A673 (cell line): ENCODE measurements at regions of chr6 and their contacts with region 1.

Region 1: GRCh38 chr6:32971581-32972352 is 3.4 kb downstream of the BRD2 start:
- DNase-seq: peak; percentile 100
- H3K4me3 ChIP-seq: peak overlapping the region; percentile 94
- H3K27ac ChIP-seq: peak overlapping the region; percentile 100
- H3K4me1 ChIP-seq: peaks cover 32% of the 10 kb centered on the region
- H3K27me3 ChIP-seq: no peaks in the 10 kb centered on the region
- CTCF ChIP-seq: no peak

Region 2: GRCh38 chr6:32838114-32838958 is 133.4 kb before region 1 on chr6 and contains the start of gene TAP2:
- CTCF ChIA-PET with region 1: interaction called, 11 read pairs
- POLR2A ChIA-PET with region 1: interaction called, 7 read pairs
- intact Hi-C with region 1: no loop called
- DNase-seq: peak; percentile 93
- H3K4me3 ChIP-seq: peak within 1 kb of the TSS; percentile 88
- H3K27ac ChIP-seq: peak within 1 kb of the TSS; percentile 91
- H3K4me1 ChIP-seq: peaks cover 9% of the 10 kb centered on the region
- H3K27me3 ChIP-seq: no peaks in the 10 kb centered on the region
- CTCF ChIP-seq: peak; percentile 98
- total RNA-seq, gene TAP2: 39.2 and 46.5 TPM in 2 replicates

Region 3: GRCh38 chr6:32885698-32886286 is 86.0 kb before region 1 on chr6:
- CTCF ChIA-PET with region 1: no interaction called
- POLR2A ChIA-PET with region 1: interaction called, 24 read pairs
- intact Hi-C with region 1: no loop called
- DNase-seq: peak; percentile 79
- H3K4me3 ChIP-seq: no peak overlapping the region
- H3K27ac ChIP-seq: no peak overlapping the region
- H3K4me1 ChIP-seq: peaks cover 5% of the 10 kb centered on the region
- H3K27me3 ChIP-seq: no peaks in the 10 kb centered on the region
- CTCF ChIP-seq: peak; percentile 67

Region 4: GRCh38 chr6:32933636-32934085 is 38.1 kb before region 1 on chr6:
- CTCF ChIA-PET with region 1: interaction called, 11 read pairs
- POLR2A ChIA-PET with region 1: no interaction called
- intact Hi-C with region 1: no loop called
- DNase-seq: peak; percentile 82
- H3K4me3 ChIP-seq: no peak overlapping the region
- H3K27ac ChIP-seq: no peak overlapping the region
- H3K4me1 ChIP-seq: no peaks in the 10 kb centered on the region
- H3K27me3 ChIP-seq: peaks cover 25% of the 10 kb centered on the region
- CTCF ChIP-seq: peak; percentile 88

Region 5: DNA sequence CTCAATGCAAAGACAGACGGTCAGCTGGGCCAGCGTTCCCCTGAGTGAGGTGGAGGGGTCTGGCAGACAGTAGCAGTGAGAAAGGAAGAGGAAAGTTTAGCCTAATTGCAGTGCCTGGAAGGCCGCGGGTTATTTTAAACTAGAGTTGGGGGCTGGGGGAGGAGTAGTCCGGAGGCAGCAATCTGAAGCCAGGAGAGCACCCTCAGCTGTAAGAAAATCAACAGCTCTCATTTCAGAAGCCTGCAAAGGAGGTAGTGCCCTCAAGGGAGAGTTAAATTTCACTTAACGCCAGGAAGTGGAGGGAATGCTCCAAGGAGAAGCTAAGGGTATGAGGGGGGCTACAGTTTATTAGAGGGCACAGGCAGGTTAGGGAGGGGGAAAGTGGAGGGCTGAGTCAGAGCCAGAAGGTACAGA is 263.5 kb after region 1 on chr6:
- CTCF ChIA-PET with region 1: no interaction called
- POLR2A ChIA-PET with region 1: no interaction called
- intact Hi-C with region 1: no loop called
- DNase-seq: no peak
- H3K4me3 ChIP-seq: no peak overlapping the region
- H3K27ac ChIP-seq: no peak overlapping the region
- H3K4me1 ChIP-seq: no peaks in the 10 kb centered on the region
- H3K27me3 ChIP-seq: no peaks in the 10 kb centered on the region
- CTCF ChIP-seq: no peak

Region 6: DNA sequence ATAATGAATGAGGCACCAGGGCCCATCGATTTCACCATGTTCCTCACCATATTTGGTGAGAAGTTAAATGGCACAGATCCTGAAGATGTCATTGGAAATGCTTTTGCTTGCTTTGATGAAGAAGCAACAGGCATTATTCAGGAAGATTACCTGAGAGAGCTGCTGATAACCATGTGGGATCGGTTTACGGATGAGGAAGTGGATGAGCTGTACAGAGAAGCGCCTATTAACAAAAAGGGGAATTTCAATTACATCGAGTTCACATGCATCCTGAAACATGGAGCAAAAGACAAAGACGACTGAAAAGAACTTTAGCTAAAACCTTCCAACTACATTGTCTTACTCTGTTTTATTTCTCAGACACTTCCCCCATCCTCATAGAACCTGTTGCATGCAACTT is 367.4 kb after region 1 on chr6:
- CTCF ChIA-PET with region 1: no interaction called
- POLR2A ChIA-PET with region 1: no interaction called
- intact Hi-C with region 1: no loop called
- DNase-seq: no peak
- H3K4me3 ChIP-seq: no peak overlapping the region
- H3K27ac ChIP-seq: no peak overlapping the region
- H3K4me1 ChIP-seq: no peaks in the 10 kb centered on the region
- H3K27me3 ChIP-seq: no peaks in the 10 kb centered on the region
- CTCF ChIP-seq: no peak

Region 7: DNA sequence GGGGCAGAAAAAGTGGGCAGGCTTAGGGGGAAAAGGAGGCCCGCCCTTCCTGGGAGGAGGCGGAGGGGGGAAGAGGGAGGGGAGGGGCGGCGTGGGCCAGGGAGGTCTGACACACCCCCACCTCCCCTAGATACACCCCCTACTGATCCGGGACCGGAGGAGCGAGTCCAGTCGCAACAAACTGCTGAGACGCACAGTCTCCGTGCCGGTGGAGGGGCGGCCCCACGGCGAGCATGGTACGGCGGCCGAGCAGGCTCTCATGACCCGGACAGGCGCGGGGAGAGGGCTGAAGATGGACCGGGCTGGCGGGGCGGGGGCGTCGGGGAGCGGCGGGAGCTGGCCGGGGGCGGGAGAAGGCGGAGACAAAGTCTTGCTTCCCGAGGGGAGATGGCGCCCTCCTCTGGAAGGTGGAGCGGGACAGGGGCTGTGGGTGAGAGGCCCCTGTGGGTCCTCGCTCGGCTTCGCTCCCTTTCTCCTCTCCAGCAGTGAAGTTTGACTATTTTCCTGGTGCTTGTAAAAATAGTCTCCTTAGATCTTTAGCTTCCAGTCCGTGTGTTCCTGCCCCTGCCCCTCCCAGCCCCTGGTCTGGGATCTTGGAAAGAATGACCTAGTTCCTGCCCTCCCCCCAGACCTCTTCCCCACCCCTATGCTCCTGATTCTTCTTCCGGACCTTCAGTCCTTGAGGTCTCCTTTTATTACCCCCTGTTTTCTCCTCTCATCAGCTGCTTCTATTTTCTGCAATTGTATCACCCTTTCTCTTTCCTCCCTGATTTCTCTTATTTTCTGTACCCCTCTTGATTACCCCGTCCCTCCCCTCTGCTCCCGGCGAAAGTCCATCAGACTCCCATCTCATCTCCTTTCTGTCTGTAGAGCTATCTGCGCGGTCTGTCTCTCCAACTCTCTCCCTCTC is 454.2 kb after region 1 on chr6:
- CTCF ChIA-PET with region 1: no interaction called
- POLR2A ChIA-PET with region 1: no interaction called
- intact Hi-C with region 1: loop called (anchors 10 kb)
- DNase-seq: peak; percentile 93
- H3K4me3 ChIP-seq: peak overlapping the region; percentile 59
- H3K27ac ChIP-seq: peak overlapping the region; percentile 90
- H3K4me1 ChIP-seq: peaks cover 45% of the 10 kb centered on the region
- H3K27me3 ChIP-seq: no peaks in the 10 kb centered on the region
- CTCF ChIP-seq: peak; percentile 66